ENCODE measurements at regions of chr2 and their contacts with region 1.

Region 1: DNA sequence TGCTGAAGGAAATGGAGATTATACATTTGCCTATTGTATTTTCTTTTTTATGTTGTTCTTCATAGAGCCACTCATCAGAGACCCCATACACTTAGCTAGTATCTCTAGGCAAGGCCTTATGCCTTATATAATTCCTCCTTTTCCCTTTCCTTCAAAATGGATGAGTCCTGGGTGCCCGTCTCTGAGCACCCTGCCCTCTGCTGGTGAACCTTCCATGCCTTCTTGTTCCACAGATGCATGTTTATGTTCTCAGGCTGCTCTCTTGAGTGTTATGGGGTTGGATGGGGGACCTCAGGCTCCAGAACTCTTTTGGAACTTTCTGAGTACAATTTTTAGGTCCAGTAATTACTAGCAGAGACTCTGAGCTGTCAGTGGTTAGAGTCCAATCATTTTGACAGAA is 368.6 kb upstream of the SPRED2 start:
- DNase-seq: peak; percentile 20
- H3K4me3 ChIP-seq: no peak overlapping the region
- H3K27ac ChIP-seq: no peak overlapping the region
- H3K4me1 ChIP-seq: no peaks in the 10 kb centered on the region
- H3K27me3 ChIP-seq: no peaks in the 10 kb centered on the region
- CTCF ChIP-seq: peak; percentile 42 to 64

Region 2: DNA sequence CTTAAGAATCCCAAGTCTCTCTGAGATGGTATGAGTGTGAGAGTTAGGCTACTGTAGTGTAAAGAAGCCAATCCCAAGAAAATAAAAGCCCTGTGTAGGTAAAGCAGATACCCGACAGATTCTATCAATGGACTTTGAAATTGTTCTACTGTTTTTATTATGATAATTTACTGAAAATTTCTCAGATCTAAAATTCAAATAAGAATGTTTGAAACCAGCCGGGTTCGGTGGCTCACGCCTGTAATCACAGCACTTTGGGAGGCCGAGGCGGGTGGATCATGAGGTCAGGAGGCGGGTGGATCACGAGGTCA is 160.2 kb before region 1 on chr2:
- CTCF ChIA-PET with region 1: no interaction called
- dilution Hi-C with region 1: no loop called
- in situ Hi-C with region 1: no loop called
- intact Hi-C with region 1: loop called (anchors 1 kb)
- DNase-seq: no peak
- H3K4me3 ChIP-seq: no peak overlapping the region
- H3K27ac ChIP-seq: no peak overlapping the region
- H3K4me1 ChIP-seq: peaks cover 11% of the 10 kb centered on the region
- H3K27me3 ChIP-seq: peaks cover 3% of the 10 kb centered on the region
- CTCF ChIP-seq: no peak

Region 3: GRCh38 chr2:65686927-65687521 is 114.0 kb before region 1 on chr2:
- CTCF ChIA-PET with region 1: no interaction called
- dilution Hi-C with region 1: no loop called
- in situ Hi-C with region 1: no loop called
- intact Hi-C with region 1: loop called (anchors 5 kb)
- DNase-seq: no peak
- H3K4me3 ChIP-seq: no peak overlapping the region
- H3K27ac ChIP-seq: no peak overlapping the region
- H3K4me1 ChIP-seq: no peaks in the 10 kb centered on the region
- H3K27me3 ChIP-seq: no peaks in the 10 kb centered on the region
- CTCF ChIP-seq: peak in 1 of 2 donors; percentile 48